ENCODE measurements at regions of chr1 and their contacts with region 1.

Region 1: GRCh38 chr1:176950736-176951324 is 213.7 kb downstream of the ASTN1 start:
- DNase-seq: no peak
- H3K4me3 ChIP-seq: no peak overlapping the region
- H3K27ac ChIP-seq: no peak overlapping the region
- H3K4me1 ChIP-seq: peaks cover 35% of the 10 kb centered on the region
- H3K27me3 ChIP-seq: no peaks in the 10 kb centered on the region
- CTCF ChIP-seq: no peak

Region 2: DNA sequence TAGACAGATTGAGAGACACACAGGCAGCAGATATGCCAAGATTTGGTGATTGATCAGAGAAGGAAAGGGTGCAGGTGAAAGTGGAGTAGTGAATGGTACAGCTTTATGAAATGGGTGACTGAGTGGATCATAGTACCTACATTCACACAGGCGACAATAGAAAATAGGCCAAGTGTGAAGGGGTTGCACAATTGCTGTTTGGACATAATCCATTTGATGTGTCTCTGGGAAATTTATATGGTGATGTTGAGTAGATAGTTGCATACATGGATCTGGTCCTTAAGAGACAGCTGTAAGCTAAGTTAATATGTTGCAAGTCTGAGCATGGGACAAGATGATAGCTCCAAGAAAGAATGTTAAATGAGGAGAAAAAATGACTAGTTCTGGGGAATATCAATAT is 625.2 kb before region 1 on chr1:
- CTCF ChIA-PET with region 1: no interaction called
- POLR2A ChIA-PET with region 1: no interaction called
- intact Hi-C with region 1: no loop called
- DNase-seq: no peak
- H3K4me3 ChIP-seq: no peak overlapping the region
- H3K27ac ChIP-seq: no peak overlapping the region
- H3K4me1 ChIP-seq: no peaks in the 10 kb centered on the region
- H3K27me3 ChIP-seq: peaks cover 6% of the 10 kb centered on the region
- CTCF ChIP-seq: no peak

Region 3: GRCh38 chr1:176904057-176904751 is 46.6 kb before region 1 on chr1:
- CTCF ChIA-PET with region 1: interaction called, 3 read pairs
- POLR2A ChIA-PET with region 1: interaction called, 3 read pairs
- intact Hi-C with region 1: loop called (anchors 2 kb)
- DNase-seq: peak; percentile 89
- H3K4me3 ChIP-seq: peak overlapping the region; percentile 3
- H3K27ac ChIP-seq: peak overlapping the region; percentile 72
- H3K4me1 ChIP-seq: peaks cover 35% of the 10 kb centered on the region
- H3K27me3 ChIP-seq: no peaks in the 10 kb centered on the region
- CTCF ChIP-seq: no peak

Measured in A673 (cell line).